CD4-positive, alpha-beta memory T cell (primary cell): ENCODE measurements at regions of chr1 and their contacts with region 1.

Region 1: GRCh38 chr1:154760469-154760933 is 109.6 kb downstream of the KCNN3 start:
- DNase-seq: peak; percentile 76 to 85 (median 79)
- H3K4me3 ChIP-seq: no peak overlapping the region
- H3K4me3 Mint-ChIP-seq: peak overlapping the region; percentile 50 to 75 (median 66)
- H3K27ac ChIP-seq: no peak overlapping the region
- H3K27ac Mint-ChIP-seq: no peak overlapping the region
- H3K4me1 ChIP-seq: peaks cover 16% of the 10 kb centered on the region
- H3K4me1 Mint-ChIP-seq: peaks cover 9 to 19% (median 15%) of the 10 kb centered on the region in 4 donors
- H3K27me3 ChIP-seq: no peaks in the 10 kb centered on the region
- H3K27me3 Mint-ChIP-seq: peaks cover 0 to 7% of the 10 kb centered on the region in 2 donors

Region 2: GRCh38 chr1:154669464-154670282 is 90.8 kb before region 1 on chr1:
- CTCF ChIA-PET with region 1: interaction called, 22 read pairs
- POLR2A ChIA-PET with region 1: no interaction called
- intact Hi-C with region 1: loop called (anchors 1 kb)
- DNase-seq: peak; percentile 65 to 73 (median 68)
- H3K4me3 ChIP-seq: no peak overlapping the region
- H3K4me3 Mint-ChIP-seq: no peak overlapping the region
- H3K27ac ChIP-seq: no peak overlapping the region
- H3K27ac Mint-ChIP-seq: no peak overlapping the region
- H3K4me1 ChIP-seq: no peaks in the 10 kb centered on the region
- H3K4me1 Mint-ChIP-seq: no peaks in the 10 kb centered on the region
- H3K27me3 ChIP-seq: no peaks in the 10 kb centered on the region
- H3K27me3 Mint-ChIP-seq: peaks cover 2% of the 10 kb centered on the region in 2 donors

Region 3: DNA sequence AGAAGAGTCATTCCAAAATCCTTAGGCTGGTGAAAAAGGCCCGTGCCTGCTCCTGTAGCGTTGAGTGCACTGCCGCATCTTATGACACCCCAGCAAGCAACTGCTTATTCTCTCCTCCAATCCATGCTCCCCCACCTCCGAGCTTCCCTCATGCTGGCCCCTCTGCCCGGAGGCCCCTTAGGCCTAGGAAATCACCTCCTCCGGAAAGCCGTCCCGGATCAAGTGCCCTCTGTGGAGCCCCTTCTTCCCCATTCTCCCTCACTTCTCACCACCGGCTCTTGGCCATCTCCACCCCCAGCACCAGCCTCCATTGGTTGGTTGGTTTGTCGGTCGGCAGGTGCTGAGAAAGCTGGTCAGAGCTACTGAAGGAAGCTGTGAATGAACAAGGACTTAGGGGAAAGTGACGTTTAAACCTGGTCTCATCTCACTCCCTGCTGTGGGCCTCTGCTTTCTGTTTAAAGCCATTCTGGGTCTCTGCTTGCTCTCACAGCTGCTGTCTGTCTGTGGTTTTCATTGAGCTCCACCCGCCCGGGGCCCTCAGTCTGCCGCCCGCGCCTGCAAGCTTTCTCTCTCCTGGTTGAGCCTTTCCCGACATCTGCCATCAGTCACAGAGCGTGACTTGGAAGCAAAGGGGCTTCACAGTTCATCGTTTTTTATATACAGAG is 12.6 kb before region 1 on chr1:
- CTCF ChIA-PET with region 1: interaction called, 37 read pairs
- POLR2A ChIA-PET with region 1: interaction called, 6 read pairs
- intact Hi-C with region 1: no loop called
- DNase-seq: peak; percentile 29 to 55 (median 48)
- H3K4me3 ChIP-seq: peak overlapping the region in 1 of 2 donors; percentile 16
- H3K4me3 Mint-ChIP-seq: peak overlapping the region; percentile 51 to 92 (median 78)
- H3K27ac ChIP-seq: no peak overlapping the region
- H3K27ac Mint-ChIP-seq: peak overlapping the region; percentile 69 to 95 (median 88)
- H3K4me1 ChIP-seq: peaks cover 49% of the 10 kb centered on the region
- H3K4me1 Mint-ChIP-seq: peaks cover 29 to 42% (median 37%) of the 10 kb centered on the region in 4 donors
- H3K27me3 ChIP-seq: no peaks in the 10 kb centered on the region
- H3K27me3 Mint-ChIP-seq: peaks cover 2 to 4% of the 10 kb centered on the region in 2 donors

Region 4: DNA sequence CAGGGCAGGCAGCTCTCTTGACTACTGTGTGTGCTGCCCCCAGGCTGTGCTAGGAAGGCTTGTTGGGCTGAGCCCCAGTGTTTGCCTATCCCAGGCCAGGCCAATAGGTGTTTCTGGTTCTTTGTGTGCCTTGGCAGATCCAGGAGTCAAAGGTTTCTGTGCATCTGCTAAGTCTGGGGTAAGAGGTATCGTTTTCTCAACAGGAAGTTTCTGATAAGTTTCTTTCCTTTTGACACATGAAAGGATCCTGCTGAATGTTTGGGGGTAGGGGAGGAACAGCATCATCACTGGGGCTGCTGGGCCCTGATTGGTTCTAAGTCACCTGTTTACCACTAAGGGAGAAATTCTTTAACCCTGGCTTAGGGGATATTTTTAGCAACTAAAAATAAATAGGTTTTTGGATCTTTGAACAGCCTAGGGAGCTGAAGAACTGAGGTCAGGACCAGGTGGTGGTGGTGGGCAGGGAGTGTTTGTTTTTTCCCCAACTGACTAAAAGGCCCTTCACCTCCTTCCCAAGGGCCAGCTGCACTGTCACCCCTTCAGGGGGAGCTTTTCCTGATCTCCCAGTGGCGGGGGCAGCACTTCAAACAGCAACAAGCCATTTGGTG is 24.5 kb after region 1 on chr1:
- CTCF ChIA-PET with region 1: interaction called, 15 read pairs
- POLR2A ChIA-PET with region 1: no interaction called
- intact Hi-C with region 1: no loop called
- DNase-seq: peak; percentile 61 to 73 (median 68)
- H3K4me3 ChIP-seq: no peak overlapping the region
- H3K4me3 Mint-ChIP-seq: peak overlapping the region; percentile 7 to 87 (median 56)
- H3K27ac ChIP-seq: peak overlapping the region; percentile 40
- H3K27ac Mint-ChIP-seq: peak overlapping the region; percentile 56 to 95 (median 90)
- H3K4me1 ChIP-seq: peaks cover 25% of the 10 kb centered on the region
- H3K4me1 Mint-ChIP-seq: peaks cover 16 to 33% (median 27%) of the 10 kb centered on the region in 4 donors
- H3K27me3 ChIP-seq: no peaks in the 10 kb centered on the region
- H3K27me3 Mint-ChIP-seq: no peaks in the 10 kb centered on the region

Region 5: GRCh38 chr1:154791292-154792166 is 31.0 kb after region 1 on chr1:
- CTCF ChIA-PET with region 1: interaction called, 46 read pairs
- POLR2A ChIA-PET with region 1: interaction called, 4 read pairs
- intact Hi-C with region 1: loop called (anchors 1 kb)
- DNase-seq: peak; percentile 82 to 94 (median 86)
- H3K4me3 ChIP-seq: peak overlapping the region in 1 of 2 donors; percentile 24
- H3K4me3 Mint-ChIP-seq: peak overlapping the region in 7 of 8 donors; percentile 68 to 87 (median 76)
- H3K27ac ChIP-seq: peak overlapping the region; percentile 40
- H3K27ac Mint-ChIP-seq: peak overlapping the region; percentile 61 to 92 (median 86)
- H3K4me1 ChIP-seq: peaks cover 28% of the 10 kb centered on the region
- H3K4me1 Mint-ChIP-seq: peaks cover 18 to 33% (median 24%) of the 10 kb centered on the region in 4 donors
- H3K27me3 ChIP-seq: no peaks in the 10 kb centered on the region
- H3K27me3 Mint-ChIP-seq: peaks cover 0 to 5% of the 10 kb centered on the region in 2 donors

Region 6: DNA sequence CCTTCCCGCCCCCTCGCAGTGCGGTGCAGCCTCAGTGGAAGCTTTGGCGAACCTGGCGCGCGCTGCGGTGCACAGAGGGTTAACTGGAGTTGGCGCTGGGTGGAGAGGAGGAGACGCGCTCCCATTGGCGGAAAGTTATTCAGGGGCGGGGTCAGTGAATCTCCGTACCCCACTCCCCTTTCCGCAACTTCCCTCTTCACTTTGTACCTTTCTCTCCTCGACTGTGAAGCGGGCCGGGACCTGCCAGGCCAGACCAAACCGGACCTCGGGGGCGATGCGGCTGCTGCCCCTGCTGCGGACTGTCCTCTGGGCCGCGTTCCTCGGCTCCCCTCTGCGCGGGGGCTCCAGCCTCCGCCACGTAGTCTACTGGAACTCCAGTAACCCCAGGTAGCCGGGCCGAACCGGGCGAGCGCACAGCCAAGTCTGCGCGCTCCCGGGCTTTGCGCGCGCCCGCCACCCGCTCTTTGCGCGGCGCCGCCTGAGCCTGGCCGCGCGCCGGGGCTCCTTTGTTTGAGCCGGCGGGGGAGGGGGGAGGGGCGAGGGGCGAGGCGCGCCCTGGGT is 303.1 kb after region 1 on chr1 and contains the start of gene EFNA4:
- CTCF ChIA-PET with region 1: no interaction called
- POLR2A ChIA-PET with region 1: no interaction called
- intact Hi-C with region 1: loop called (anchors 10 kb)
- DNase-seq: peak; percentile 83 to 87 (median 86)
- H3K4me3 ChIP-seq: peak within 1 kb of the TSS; percentile 63 to 70
- H3K4me3 Mint-ChIP-seq: peak within 1 kb of the TSS; percentile 91 to 99 (median 94)
- H3K27ac ChIP-seq: peak within 1 kb of the TSS; percentile 51
- H3K27ac Mint-ChIP-seq: peak within 1 kb of the TSS; percentile 81 to 94 (median 85)
- H3K4me1 ChIP-seq: peaks cover 35% of the 10 kb centered on the region
- H3K4me1 Mint-ChIP-seq: peaks cover 23 to 52% (median 32%) of the 10 kb centered on the region in 4 donors
- H3K27me3 ChIP-seq: no peaks in the 10 kb centered on the region
- H3K27me3 Mint-ChIP-seq: no peaks in the 10 kb centered on the region
- total RNA-seq, gene EFNA4: 6.0 to 8.5 TPM